SK-N-SH (cell line): ENCODE measurements at regions of chr1 and their contacts with region 1.

Region 1: DNA sequence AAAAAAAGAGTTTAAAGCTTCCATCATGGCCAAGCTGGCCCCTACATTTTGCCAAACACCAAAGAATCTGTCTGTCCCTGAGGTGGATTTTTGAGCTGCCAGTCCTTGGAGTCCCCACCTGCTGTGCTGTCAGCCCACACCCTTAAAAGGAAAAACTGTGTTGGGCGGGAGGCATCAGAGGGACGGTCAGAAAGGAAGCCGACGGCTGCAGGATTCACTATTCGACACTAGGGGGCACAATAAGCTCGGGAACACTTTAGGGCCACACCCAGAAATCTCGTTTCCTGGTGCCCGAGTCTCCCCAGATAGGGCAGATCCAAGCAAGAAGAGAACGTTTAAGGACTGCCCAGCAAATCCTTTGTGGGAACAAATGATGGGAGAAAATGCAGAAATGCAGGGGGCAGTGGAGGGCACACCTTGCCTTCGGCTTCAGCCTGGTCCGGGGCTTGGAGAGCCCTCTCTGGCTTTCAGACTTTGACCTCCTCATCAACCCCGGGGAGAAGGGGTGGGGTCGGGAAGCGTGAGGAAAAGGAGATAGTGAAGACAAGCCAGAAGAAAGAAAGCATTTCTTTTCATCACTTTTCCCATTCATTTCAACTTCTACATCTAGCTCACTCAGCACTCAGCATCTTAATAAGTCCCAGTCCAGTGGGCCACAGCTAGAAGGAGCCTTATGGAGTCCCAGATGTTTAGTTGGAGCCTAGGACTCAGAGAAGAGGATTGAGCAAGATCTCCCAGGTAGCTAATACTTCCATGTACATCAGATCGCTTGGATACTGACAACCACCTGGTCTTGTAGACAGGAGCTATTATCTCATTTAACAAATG is 5.0 kb upstream of the CTTNBP2NL start:
- DNase-seq: peak; percentile 84
- H3K4me3 ChIP-seq: peak overlapping the region; percentile 43 to 65
- H3K27ac ChIP-seq: peak overlapping the region; percentile 31 to 73; a peak in 3 of 4 replicates
- H3K4me1 ChIP-seq: peaks cover 10 to 17% of the 10 kb centered on the region in 2 experiments
- H3K27me3 ChIP-seq: no peaks in the 10 kb centered on the region
- CTCF ChIP-seq: peak; percentile 97
- EP300 ChIP-seq: no peak
- RAD21 ChIP-seq: peak; percentile 96

Region 2: GRCh38 chr1:112114540-112114939 is 276.4 kb before region 1 on chr1:
- CTCF ChIA-PET with region 1: no interaction called
- POLR2A ChIA-PET with region 1: no interaction called
- DNase-seq: no peak
- H3K4me3 ChIP-seq: no peak overlapping the region
- H3K27ac ChIP-seq: no peak overlapping the region
- H3K4me1 ChIP-seq: no peaks in the 10 kb centered on the region
- H3K27me3 ChIP-seq: no peaks in the 10 kb centered on the region
- CTCF ChIP-seq: no peak
- EP300 ChIP-seq: no peak
- RAD21 ChIP-seq: no peak

Region 3: DNA sequence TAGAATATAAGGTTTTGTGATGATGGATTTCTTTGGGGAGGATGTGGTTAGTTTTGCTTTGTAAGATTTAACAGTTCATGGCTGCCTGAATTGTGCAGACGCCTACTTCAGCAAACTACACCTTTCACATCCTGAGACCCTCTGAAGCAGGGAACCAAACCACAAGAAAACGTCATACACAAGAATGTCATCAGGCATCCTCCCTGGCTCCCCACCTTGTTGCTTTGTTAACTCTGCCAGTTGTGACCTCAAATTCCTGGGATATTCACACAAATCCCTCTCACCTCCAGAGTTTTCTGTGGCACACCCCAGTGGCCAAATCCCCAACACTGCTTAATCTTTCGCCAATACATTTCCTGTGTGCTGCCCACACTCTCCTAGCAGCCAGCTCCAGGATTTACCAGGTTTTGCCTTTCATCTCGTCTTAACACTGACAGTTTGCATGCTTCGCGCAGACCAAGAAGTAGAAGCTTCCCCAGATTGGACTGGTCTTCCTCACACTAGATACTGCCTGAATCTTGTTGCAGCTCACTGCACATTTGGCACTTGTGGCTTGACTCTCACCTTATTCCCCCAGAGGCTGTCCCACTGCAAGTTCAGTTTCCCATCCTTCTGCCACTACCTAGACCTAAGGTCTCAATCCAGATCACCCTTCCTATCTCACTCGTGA is 46.1 kb before region 1 on chr1:
- CTCF ChIA-PET with region 1: no interaction called
- POLR2A ChIA-PET with region 1: no interaction called
- DNase-seq: no peak
- H3K4me3 ChIP-seq: no peak overlapping the region
- H3K27ac ChIP-seq: no peak overlapping the region
- H3K4me1 ChIP-seq: no peaks in the 10 kb centered on the region
- H3K27me3 ChIP-seq: peaks cover 3% of the 10 kb centered on the region; the same call in 1 of the 2 replicates
- CTCF ChIP-seq: no peak
- EP300 ChIP-seq: no peak
- RAD21 ChIP-seq: no peak

Region 4: DNA sequence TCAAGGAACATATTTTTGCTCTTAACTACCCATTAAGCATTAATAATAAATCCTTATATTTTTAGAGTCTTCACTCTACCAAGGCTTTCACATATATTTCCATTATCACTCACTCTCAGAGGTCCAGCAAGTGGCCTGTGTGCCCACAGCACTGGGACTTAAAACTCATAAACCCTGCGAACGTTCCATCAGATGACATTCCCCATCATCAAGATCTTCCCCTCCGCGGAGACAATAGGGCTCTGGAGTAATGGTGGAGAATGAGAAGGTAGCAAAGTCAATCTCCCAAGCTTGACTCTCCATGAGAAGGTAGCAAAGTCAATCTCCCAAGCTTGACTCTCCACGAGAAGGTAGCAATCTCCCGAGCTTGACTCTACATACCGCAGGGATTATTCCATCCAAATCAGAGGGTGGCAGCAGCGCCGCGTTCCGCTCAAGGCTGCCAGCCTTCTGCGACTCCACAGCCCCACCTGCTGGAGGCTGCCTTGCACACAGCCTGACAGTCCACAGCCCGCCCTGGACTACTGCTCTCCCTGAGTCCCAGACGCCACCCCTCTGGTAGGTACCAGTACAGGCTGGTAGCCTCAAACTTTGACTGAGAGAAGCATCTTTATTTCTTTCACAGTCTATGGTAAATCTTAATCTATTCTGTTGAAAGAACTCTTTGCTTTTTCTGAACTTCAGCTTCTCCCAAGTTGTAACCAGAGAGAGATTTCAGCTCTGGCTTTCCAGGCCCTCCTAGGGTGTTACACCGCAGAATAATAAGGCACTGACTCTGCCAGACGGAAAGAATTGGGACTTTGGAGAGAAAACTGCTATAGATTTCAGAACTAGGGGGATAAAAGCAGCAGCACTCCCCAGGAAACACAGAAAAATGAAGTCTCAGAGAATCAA is 21.4 kb before region 1 on chr1:
- CTCF ChIA-PET with region 1: interaction called, 28 read pairs
- POLR2A ChIA-PET with region 1: no interaction called
- DNase-seq: peak; percentile 83
- H3K4me3 ChIP-seq: peak overlapping the region in 1 of 2 experiments; percentile 42; a peak in 1 of 4 replicates
- H3K27ac ChIP-seq: no peak overlapping the region
- H3K4me1 ChIP-seq: no peaks in the 10 kb centered on the region; a peak in 1 of 4 replicates
- H3K27me3 ChIP-seq: peaks cover 33% of the 10 kb centered on the region
- CTCF ChIP-seq: peak; percentile 94
- EP300 ChIP-seq: no peak
- RAD21 ChIP-seq: peak; percentile 90

Region 5: DNA sequence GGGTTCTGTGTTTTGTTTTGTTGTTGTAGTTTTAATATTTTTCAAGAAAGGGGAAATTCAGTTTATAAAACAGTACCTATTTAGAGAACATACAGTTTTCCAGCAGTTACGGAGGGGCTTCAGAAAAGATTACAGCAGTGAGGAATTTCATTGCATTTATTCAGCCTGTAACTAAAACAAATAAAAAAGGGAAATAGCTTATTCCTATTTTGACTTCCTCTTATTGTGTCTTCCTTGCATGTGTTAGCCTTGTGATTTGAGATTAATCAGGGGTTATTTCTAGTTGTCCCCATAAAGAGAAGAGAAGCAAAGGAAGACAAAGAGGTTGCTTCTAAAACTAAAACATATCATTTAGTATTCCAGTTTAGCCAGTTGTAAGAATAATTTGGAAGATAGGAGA is 40.0 kb after region 1 on chr1:
- CTCF ChIA-PET with region 1: interaction called, 11 read pairs
- POLR2A ChIA-PET with region 1: interaction called, 3 read pairs
- DNase-seq: no peak
- H3K4me3 ChIP-seq: no peak overlapping the region
- H3K27ac ChIP-seq: no peak overlapping the region
- H3K4me1 ChIP-seq: no peaks in the 10 kb centered on the region
- H3K27me3 ChIP-seq: no peaks in the 10 kb centered on the region
- CTCF ChIP-seq: no peak
- EP300 ChIP-seq: no peak
- RAD21 ChIP-seq: no peak

Region 6: DNA sequence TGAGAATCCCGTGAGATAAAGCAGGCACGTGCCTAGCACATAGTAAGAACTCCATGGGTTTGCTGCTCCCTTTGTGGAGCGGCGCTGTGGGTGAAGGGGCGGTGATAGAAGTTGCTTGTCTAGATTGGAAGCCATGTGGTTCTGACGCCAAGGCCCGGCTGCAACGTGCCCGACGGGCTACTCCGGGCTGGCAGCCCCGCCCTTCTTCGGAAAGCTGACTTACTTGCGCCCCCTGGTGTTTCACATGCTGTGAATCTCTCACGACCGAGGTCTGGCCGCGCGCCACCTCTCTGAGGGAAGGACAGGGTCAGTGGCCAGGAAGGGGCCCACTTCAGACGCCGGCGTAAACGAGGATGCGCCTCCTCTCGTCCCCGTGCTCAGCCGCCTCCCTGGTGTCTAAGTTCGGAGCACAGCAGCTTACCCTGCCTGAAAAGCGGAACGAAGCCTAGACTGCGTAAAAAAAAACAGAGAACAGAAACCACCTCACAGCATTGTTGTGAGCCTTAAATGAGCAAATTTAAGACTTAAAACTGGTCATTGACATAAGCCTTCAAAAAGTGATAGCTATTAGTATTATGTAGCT is 75.2 kb after region 1 on chr1:
- CTCF ChIA-PET with region 1: interaction called, 154 read pairs
- POLR2A ChIA-PET with region 1: interaction called, 4 read pairs
- DNase-seq: peak; percentile 85
- H3K4me3 ChIP-seq: peak overlapping the region; percentile 24 to 35; a peak in 3 of 4 replicates
- H3K27ac ChIP-seq: peak overlapping the region in 1 of 2 experiments; percentile 15; a peak in 1 of 4 replicates
- H3K4me1 ChIP-seq: peaks cover 6 to 9% of the 10 kb centered on the region in 2 experiments; a peak in 2 of 4 replicates
- H3K27me3 ChIP-seq: no peaks in the 10 kb centered on the region
- CTCF ChIP-seq: peak; percentile 80
- EP300 ChIP-seq: no peak
- RAD21 ChIP-seq: peak; percentile 79

Region 7: GRCh38 chr1:112614460-112615065 is 223.6 kb after region 1 on chr1:
- CTCF ChIA-PET with region 1: interaction called, 14 read pairs
- POLR2A ChIA-PET with region 1: no interaction called
- DNase-seq: peak; percentile 27
- H3K4me3 ChIP-seq: no peak overlapping the region
- H3K27ac ChIP-seq: no peak overlapping the region
- H3K4me1 ChIP-seq: peaks cover 0 to 5% of the 10 kb centered on the region in 2 experiments; a peak in 2 of 4 replicates
- H3K27me3 ChIP-seq: no peaks in the 10 kb centered on the region
- CTCF ChIP-seq: peak; percentile 85
- EP300 ChIP-seq: no peak
- RAD21 ChIP-seq: peak; percentile 64

Region 8: GRCh38 chr1:112700290-112701226 is 309.6 kb after region 1 on chr1:
- CTCF ChIA-PET with region 1: interaction called, 21 read pairs
- POLR2A ChIA-PET with region 1: no interaction called
- DNase-seq: peak; percentile 87
- H3K4me3 ChIP-seq: 0 out of 4 replicates have a peak overlapping the region, but pooled peaks of 1 of the 2 experiments have one; percentile 18
- H3K27ac ChIP-seq: peak overlapping the region; percentile 70 to 90
- H3K4me1 ChIP-seq: peaks cover 36 to 54% of the 10 kb centered on the region in 2 experiments; a peak in 3 of 4 replicates
- H3K27me3 ChIP-seq: no peaks in the 10 kb centered on the region
- CTCF ChIP-seq: peak; percentile 16; the same call in 1 of the 2 replicates
- EP300 ChIP-seq: peak in 1 of 2 experiments; percentile 42; a peak in 1 of 4 replicates
- RAD21 ChIP-seq: no peak